ENCODE measurements at regions of chr19 and their contacts with region 1.

Region 1: GRCh38 chr19:32339988-32340874 is 5.2 kb upstream of the ZNF507 start:
- DNase-seq: peak; percentile 75 to 92
- ATAC-seq: peak; percentile 83
- H3K4me3 ChIP-seq: no peak overlapping the region
- H3K27ac ChIP-seq: peak overlapping the region in 1 of 2 donors; percentile 2
- H3K4me1 ChIP-seq: no peaks in the 10 kb centered on the region
- H3K27me3 ChIP-seq: no peaks in the 10 kb centered on the region

Region 2: DNA sequence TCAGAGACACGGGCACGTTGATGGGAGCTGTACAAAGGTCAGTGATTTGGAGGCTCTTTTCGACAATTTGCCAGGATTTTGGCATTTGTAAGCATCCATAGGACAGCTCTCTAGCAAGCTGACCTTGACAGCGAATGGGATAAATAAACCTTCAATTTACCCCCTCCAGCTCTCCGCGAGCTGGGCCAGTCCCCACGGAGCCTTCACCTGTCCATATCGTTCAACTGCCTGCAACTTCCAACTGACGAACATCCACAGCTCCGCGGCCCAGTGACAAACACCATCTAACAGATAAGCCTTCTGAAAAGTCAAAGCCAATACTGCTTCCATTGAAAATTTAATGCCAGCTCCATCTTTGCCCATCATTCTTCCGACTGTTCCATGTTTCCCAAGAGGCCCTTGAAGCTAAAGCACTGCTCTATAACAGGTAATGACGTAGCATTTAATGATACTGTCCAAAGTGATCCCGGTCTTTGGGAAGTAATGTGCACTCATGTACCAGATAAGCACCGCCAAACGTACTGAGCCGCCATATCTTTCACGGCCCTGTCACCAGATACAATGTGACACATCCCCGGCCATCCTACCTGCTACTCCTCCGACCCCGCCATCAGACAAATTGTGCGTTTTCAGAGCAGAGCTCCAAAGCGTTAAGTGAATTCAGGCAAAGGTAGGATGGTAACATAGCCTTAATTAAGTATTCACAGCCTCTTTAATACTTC is 360.1 kb before region 1 on chr19:
- intact Hi-C with region 1: no loop called
- DNase-seq: no peak
- ATAC-seq: no peak
- H3K4me3 ChIP-seq: no peak overlapping the region
- H3K27ac ChIP-seq: no peak overlapping the region
- H3K4me1 ChIP-seq: no peaks in the 10 kb centered on the region
- H3K27me3 ChIP-seq: no peaks in the 10 kb centered on the region

Region 3: GRCh38 chr19:32101206-32101605 is 239.0 kb before region 1 on chr19:
- intact Hi-C with region 1: no loop called
- DNase-seq: no peak
- ATAC-seq: no peak
- H3K4me3 ChIP-seq: no peak overlapping the region
- H3K27ac ChIP-seq: no peak overlapping the region
- H3K4me1 ChIP-seq: no peaks in the 10 kb centered on the region
- H3K27me3 ChIP-seq: peaks cover 0 to 2% of the 10 kb centered on the region in 2 donors

Region 4: DNA sequence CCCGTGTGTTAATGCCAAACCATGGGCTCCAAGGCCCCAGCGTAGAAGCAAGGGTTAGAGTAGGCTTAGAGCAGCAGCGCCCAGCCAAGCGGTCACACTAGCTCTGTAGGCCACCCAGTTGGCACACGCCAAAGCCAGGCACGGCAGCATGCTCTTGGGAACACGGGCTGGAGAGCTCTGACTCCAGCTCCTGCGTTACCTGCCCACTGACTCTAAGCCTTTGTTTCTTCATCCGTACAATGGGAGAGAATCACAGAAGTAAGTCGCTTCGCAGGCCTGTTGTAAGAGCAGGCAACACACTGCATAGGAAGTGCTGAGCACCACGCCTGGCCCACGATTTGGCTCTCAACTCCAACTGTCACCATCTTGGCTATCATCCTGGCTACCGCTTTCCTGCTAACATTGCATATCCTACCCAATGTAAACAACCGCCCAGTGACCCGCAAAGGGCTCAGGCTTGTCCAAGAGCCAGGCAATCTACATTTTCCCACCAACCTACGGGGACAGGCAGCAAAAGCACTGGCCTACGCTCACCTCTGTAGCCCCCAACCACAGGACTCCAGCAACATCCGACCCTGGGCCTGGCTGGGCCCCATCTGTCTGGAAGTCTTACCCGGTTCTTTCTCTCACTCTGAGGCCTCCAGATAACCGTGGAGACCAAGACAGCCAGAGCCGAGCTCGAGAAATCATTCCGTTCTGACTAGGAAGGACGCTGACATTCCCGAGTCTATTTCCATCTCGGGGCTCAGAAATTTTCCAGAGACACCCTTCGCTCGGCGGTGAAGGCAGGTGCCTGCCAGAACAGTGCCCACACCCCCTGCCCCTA is 86.3 kb before region 1 on chr19:
- intact Hi-C with region 1: no loop called
- DNase-seq: no peak
- ATAC-seq: no peak
- H3K4me3 ChIP-seq: no peak overlapping the region
- H3K27ac ChIP-seq: no peak overlapping the region
- H3K4me1 ChIP-seq: no peaks in the 10 kb centered on the region
- H3K27me3 ChIP-seq: no peaks in the 10 kb centered on the region

Region 5: DNA sequence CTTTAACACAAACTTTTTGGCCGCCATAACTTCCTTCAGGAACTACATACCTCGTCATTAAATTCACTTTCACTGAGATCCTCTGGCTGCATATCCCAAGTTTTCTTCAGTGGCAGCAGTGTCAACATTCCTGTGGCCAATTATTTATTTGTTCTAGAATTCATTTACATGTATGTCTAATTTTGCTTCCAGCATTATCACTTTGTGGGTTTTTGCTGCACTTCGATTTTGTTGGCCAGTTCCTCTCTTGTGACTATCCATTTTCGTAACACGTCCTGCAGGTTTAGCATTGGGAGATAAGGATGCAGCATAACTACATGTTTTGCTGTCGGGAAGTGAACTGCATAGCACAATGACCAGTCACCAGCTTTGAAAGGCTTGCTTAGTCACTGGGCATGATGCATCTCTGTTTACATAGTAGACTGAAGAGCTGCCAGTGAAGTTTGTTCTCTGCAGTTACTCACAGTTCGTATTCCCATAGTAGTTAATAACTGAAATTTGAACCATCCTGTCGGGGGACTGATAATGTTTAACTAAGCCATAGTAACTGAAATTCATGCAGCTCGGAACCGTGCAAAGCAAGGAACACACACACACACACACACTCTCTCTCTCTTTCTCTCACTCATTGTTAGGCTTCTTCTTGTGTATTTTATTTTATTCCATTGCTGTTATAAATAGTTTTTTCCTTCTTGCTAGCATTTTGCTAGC is 33.5 kb after region 1 on chr19:
- intact Hi-C with region 1: loop called (anchors 5 kb)
- DNase-seq: no peak
- ATAC-seq: peak; percentile 85
- H3K4me3 ChIP-seq: peak overlapping the region in 1 of 2 donors; percentile 31
- H3K27ac ChIP-seq: peak overlapping the region in 1 of 2 donors; percentile 48
- H3K4me1 ChIP-seq: no peaks in the 10 kb centered on the region
- H3K27me3 ChIP-seq: no peaks in the 10 kb centered on the region

Region 6: DNA sequence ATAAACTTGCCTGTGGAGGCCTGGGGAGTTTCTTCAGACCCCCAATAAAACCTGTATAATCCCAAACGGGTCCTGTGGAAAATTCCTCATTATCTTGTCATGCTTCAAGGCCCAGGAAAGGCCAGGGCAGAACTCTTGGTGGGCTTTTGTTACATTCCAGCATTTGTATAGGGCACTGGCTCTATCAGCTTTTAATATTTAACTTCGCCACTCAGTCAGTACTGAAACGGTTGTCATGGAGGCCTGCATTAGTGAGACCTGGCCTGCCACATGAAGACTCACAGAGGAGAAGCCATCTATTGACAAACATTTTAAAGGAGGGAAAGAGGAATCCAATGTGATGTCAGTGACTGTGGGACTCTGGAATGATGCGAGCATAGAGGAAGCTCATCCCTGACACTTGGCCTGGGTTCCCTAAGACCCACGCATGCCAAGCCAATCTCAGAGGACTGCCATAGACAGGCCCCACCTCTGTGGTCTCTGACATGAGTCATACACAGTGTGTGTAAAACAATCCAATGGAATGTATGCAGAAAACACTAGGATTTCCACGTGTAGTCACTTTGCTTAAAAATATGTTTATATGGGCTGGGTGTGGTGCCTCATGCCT is 57.4 kb after region 1 on chr19:
- intact Hi-C with region 1: no loop called
- DNase-seq: no peak
- ATAC-seq: no peak
- H3K4me3 ChIP-seq: no peak overlapping the region
- H3K27ac ChIP-seq: no peak overlapping the region
- H3K4me1 ChIP-seq: no peaks in the 10 kb centered on the region
- H3K27me3 ChIP-seq: no peaks in the 10 kb centered on the region

Region 7: DNA sequence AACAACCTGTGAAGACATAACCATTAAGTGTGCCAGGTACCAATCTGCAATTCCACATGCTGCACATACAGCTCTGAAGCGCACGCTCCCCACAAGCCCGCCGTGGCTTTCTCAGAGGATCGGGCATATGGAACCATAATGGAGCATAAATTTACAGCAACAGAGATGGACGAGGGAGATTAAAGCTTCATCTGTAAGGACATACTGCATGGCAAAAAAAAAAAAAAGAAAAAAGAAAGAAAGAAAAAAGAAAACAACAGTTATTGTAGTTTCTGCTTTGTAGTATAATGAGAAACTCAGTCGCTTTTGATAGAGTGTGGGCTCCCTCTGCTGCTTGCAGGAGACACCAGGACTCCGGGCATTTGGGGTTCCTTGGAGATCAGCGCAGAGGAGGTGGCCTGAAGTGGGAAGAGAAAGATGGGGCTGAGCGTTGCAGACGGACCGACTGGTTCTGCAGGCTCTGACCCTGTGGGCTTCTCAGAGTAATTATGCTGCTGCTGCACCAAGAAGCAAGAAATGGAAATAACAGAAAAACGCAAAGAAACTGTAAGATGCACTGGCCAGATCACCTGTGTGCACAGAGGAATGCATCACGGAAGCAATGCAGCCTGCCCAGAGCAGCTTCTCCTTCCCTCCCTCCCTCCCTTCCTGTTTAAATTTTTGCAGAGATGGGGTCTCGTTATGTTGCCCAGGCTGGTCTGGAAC is 230.0 kb after region 1 on chr19:
- intact Hi-C with region 1: loop called in 1 of 2 experiments (anchors 5 kb)
- DNase-seq: peak in 1 of 2 donors; percentile 32
- ATAC-seq: no peak
- H3K4me3 ChIP-seq: no peak overlapping the region
- H3K27ac ChIP-seq: no peak overlapping the region
- H3K4me1 ChIP-seq: no peaks in the 10 kb centered on the region
- H3K27me3 ChIP-seq: peaks cover 0 to 1% of the 10 kb centered on the region in 2 donors

Region 8: DNA sequence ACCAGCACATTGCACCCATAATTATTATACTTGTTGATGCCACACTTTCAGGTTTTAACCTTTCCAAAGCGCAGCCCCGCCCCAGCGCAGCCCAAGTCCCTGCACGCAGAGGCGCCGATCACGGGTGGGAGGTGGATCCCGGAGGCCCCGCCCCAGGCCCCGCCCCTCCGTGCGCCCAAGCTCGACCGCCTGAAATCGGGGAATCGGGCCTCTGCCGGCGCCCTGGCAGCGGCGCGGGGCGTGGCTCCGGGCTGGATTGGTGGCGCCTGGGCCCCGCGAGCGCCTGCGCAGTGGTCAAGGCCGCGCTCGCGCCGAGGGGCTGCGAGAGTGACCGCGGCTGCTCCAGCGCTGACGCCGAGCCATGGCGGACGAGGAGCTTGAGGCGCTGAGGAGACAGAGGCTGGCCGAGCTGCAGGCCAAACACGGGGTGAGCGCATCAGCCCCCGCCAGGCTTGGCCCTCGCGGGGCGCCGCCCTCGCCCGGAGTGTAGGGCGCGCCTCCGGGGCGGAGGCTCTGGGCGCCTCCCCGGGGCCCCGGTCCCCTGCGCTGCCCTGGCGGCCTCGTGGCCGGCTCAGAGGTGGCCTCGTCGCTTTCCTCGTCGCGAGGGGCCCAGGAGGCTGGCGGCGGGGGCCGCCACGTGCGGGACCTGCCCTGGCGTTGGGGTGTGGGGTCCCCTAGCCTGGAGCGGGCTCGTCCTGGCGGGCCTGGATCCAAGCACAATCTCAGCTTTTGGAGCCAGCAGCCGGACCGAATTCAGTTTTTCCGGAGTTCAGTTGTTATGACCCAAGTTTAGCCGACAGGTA is 240.9 kb after region 1 on chr19 and contains the start of gene PDCD5:
- intact Hi-C with region 1: loop called in 1 of 2 experiments (anchors 5 kb)
- DNase-seq: peak; percentile 98 to 99
- ATAC-seq: peak; percentile 99
- H3K4me3 ChIP-seq: peak within 1 kb of the TSS; percentile 64
- H3K27ac ChIP-seq: peak within 1 kb of the TSS in 1 of 2 donors; percentile 26
- H3K4me1 ChIP-seq: peaks cover 0 to 10% of the 10 kb centered on the region in 2 donors
- H3K27me3 ChIP-seq: no peaks in the 10 kb centered on the region
- total RNA-seq, gene PDCD5: 71.2 to 76.8 TPM